ENCODE measurements at regions of chr6 and their contacts with region 1.

Region 1: DNA sequence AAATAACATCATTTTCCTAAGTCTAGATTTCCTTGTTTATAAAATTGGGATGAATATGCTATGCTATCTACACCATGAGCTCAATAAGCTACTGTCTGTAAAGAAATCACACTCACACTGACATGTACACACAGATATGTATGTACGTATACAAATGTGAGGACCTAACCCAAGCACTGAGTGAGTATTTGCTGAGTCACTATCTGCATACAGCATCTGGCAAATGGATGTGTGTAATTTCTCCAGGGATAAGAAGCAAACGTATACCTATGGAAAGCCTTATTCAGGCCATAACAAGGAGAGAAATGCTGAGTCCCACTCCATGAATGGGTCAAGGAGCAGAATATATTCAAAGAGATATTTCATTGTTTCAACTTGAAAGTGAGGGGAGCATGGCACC is 153.9 kb downstream of the LPA start:
- DNase-seq: peak in 1 of 2 experiments; percentile 38
- ATAC-seq: peak in 1 of 2 experiments; percentile 44; a peak in 2 of 6 replicates
- H3K4me3 ChIP-seq: no peak overlapping the region
- H3K27ac ChIP-seq: peak overlapping the region; percentile 31 to 71; a peak in 4 of 6 replicates
- H3K4me1 ChIP-seq: 0 out of 3 replicates have a peak, but pooled peaks cover 8% of the 10 kb centered on the region
- CTCF ChIP-seq: no peak
- EP300 ChIP-seq: no peak
- POLR2A ChIP-seq: no peak
- RAD21 ChIP-seq: no peak

Region 2: DNA sequence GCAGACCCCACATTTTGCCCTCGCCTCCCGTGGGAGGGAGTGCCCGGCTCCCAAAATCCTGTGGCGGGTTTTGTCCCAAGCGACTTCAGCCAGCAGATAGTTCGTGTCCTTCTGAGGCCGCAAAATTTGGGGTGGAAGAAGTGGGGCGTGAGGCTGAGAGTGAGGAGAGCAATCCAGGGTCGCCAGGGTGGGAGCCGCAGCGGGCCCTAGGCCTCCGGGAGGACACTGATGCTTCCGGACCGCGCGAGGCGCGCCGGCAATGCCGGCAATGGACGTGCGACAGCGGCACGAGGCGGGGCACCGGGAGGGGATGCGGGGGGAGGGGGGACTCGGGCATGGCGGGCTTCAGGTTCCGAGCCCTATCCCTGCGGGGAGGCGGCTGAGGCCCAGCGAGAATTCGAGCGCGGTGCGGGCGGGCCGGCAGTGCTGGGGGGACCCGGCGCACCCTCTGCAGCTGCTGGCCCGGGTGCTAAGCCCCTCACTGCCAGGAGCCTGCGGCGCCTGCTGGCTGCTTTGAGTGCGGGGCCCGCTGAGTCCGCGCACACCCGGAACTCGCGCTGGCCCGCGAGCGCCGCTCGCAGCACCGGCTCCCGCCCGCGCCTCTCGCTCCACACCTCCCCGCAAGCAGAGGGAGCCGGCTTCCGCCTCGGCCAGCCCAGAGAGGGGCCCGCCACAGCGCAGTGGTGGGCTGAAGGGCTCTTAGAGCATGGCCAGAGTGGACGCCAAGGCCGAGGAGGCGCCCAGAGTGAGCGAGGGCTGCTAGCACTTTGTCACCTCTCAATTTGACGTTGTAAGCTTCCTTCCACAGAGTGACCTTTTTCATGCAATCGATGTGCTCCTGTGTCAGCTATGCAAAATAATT is 10.1 kb after region 1 on chr6:
- CTCF ChIA-PET with region 1: interaction called, 10 read pairs
- POLR2A ChIA-PET with region 1: no interaction called
- DNase-seq: peak; percentile 61 to 71
- ATAC-seq: peak; percentile 94 to 96
- H3K4me3 ChIP-seq: peak overlapping the region; percentile 58
- H3K27ac ChIP-seq: peak overlapping the region; percentile 77 to 97
- H3K4me1 ChIP-seq: 0 out of 3 replicates have a peak, but pooled peaks cover 9% of the 10 kb centered on the region
- CTCF ChIP-seq: peak; percentile 74; the same call in 2 of the 3 replicates
- EP300 ChIP-seq: no peak
- POLR2A ChIP-seq: peak; percentile 36; the same call in 1 of the 2 replicates
- RAD21 ChIP-seq: peak; percentile 66 to 68; a peak in 4 of 5 replicates